PC-3 (cell line): ENCODE measurements at regions of chr6 and their contacts with region 1.

Region 1: DNA sequence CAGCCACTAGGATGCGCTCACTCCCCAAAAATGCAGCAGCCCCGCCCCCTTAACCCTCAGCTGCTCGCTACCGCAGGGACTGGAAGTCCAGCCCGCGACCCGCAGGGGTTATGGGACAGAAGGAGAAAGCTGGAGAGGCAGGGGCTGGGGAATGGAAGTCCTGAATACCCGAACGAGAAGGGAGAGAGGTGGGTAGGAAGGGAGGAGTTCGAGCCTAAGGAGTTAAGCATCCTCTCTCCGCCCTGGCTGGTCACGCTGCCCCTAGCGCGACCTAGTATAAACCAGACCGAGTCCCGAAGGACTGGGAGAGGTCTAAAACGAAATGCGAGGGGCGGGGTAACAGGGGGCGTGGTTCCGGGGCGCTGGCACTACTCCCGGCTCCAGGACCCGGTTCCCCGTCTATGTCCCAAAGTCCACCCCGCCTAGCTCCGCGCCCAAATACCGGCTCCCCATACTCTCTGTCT is 448 bp upstream of the DDAH2 start:
- DNase-seq: peak; percentile 82
- ATAC-seq: peak; percentile 76
- H3K4me3 ChIP-seq: peak overlapping the region; percentile 77
- H3K27ac ChIP-seq: peak overlapping the region; percentile 30
- H3K4me1 ChIP-seq: peaks cover 11% of the 10 kb centered on the region
- H3K27me3 ChIP-seq: no peaks in the 10 kb centered on the region
- CTCF ChIP-seq: peak; percentile 88; the same call in 1 of the 2 replicates

Region 2: DNA sequence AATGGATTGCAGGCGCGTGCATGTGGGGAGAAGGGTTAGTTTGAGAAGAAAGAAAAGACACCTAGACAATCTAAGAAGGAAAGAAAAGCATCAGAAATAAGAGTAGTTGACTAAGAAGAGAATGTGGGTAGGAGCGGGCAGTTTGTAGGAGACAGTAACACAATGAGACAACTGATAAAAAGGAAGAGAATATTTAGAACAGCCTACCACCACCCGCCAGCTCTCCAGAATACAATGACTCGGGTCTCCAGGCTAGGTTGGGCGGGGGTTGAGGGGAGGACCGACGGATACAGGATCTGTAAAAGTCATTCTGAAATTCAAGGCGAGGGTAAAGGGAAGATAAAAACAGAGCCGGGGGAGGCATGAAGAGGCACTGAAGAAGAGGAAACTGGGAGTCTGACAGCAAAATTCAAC is 27.1 kb before region 1 on chr6:
- CTCF ChIA-PET with region 1: no interaction called
- POLR2A ChIA-PET with region 1: interaction called, 21 read pairs
- intact Hi-C with region 1: no loop called
- DNase-seq: peak; percentile 8
- ATAC-seq: peak; percentile 23
- H3K4me3 ChIP-seq: peak overlapping the region; percentile 85
- H3K27ac ChIP-seq: peak overlapping the region; percentile 71
- H3K4me1 ChIP-seq: peaks cover 10% of the 10 kb centered on the region
- H3K27me3 ChIP-seq: no peaks in the 10 kb centered on the region
- CTCF ChIP-seq: no peak

Region 3: DNA sequence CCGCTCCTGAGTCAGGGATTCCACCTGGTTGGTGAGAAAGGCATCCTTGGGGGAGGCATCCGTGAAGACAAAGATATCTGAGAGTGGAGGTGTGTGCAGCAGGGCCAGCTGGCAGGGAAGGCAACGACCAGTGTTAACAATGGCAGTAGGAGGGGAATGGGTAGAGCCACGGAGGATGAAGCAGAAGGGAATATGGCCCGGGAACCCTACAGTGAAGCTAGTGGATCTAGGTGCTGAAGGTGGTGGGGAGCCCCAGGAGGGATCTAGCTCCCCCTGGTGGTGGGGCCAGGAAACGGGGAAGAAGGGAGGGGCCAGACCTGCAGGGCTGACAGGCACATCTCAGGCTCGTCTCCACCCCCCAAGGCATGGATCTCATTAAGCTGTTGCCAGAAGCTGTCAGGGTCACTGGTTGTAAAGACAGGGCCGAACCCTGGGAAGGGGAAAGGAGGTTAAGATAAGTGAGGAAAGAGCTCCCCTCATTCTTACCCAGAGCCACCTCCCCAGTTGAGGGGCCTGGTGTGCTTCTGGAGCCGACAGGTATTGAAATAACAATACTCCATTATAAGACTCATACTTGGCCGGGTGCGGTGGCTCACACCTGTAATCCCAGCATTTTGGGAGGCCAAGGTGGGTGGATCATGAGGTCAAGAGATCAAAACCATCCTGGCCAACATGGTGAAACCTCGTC is 40.3 kb after region 1 on chr6:
- CTCF ChIA-PET with region 1: interaction called, 7 read pairs
- POLR2A ChIA-PET with region 1: no interaction called
- intact Hi-C with region 1: loop called (anchors 1 kb)
- DNase-seq: peak; percentile 85
- ATAC-seq: peak; percentile 64
- H3K4me3 ChIP-seq: no peak overlapping the region
- H3K27ac ChIP-seq: no peak overlapping the region
- H3K4me1 ChIP-seq: no peaks in the 10 kb centered on the region
- H3K27me3 ChIP-seq: no peaks in the 10 kb centered on the region
- CTCF ChIP-seq: peak; percentile 92